ENCODE measurements at regions of chr7 and their contacts with region 1.

Region 1: GRCh38 chr7:106029451-106029850 is 66.4 kb downstream of the CDHR3 start:
- DNase-seq: no peak
- ATAC-seq: no peak
- H3K4me3 ChIP-seq: no peak overlapping the region
- H3K27ac ChIP-seq: no peak overlapping the region
- H3K4me1 ChIP-seq: no peaks in the 10 kb centered on the region
- H3K27me3 ChIP-seq: no peaks in the 10 kb centered on the region
- CTCF ChIP-seq: no peak

Region 2: DNA sequence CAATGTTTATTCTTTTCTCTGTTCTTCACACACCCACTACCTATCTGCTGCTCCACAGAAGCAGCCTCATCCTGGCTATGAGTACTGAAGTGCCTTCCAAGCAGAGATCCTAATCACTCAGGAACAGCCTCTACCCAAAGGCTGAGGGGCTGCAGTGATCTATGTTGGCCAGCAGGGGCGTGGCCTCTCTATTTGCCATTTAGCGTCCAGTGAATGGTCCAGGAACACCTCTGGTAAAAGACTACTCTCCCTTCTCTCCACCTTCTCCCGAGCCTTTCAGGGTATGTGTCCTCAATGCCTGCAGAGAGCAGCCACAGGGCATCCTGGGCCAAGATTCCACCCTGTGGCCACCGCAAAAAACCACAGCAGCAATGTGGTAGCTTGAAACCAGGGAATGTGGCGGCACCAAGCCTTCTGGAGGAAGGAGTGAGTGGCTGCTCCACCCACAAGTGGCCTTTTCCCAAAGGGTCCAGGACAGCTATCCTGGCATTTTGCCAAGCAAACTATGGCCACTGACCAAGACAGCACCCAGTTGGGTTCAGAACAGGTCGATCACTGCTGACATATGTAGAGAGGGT is 11.8 kb after region 1 on chr7:
- CTCF ChIA-PET with region 1: interaction called, 10 read pairs
- POLR2A ChIA-PET with region 1: no interaction called
- in situ Hi-C with region 1: no loop called
- intact Hi-C with region 1: no loop called
- DNase-seq: peak; percentile 43
- ATAC-seq: peak; percentile 71
- H3K4me3 ChIP-seq: no peak overlapping the region
- H3K27ac ChIP-seq: no peak overlapping the region
- H3K4me1 ChIP-seq: no peaks in the 10 kb centered on the region; the same call in 1 of the 2 replicates
- H3K27me3 ChIP-seq: no peaks in the 10 kb centered on the region; the same call in 1 of the 2 replicates
- CTCF ChIP-seq: peak; percentile 87

Measured in Panc1 (cell line).